HepG2 (cell line): ENCODE measurements at regions of chr22 and their contacts with region 1.

Region 1: GRCh38 chr22:49917974-49918910 is at the starts of genes ALG12 and CRELD2:
- DNase-seq: peak; percentile 91
- ATAC-seq: peak; percentile 96
- H3K4me3 ChIP-seq: peak within 1 kb of the TSS; percentile 82 to 85 (median 83)
- H3K27ac ChIP-seq: peak within 1 kb of the TSS; percentile 93
- H3K4me1 ChIP-seq: peaks cover 26% of the 10 kb centered on the region
- H3K27me3 ChIP-seq: no peaks in the 10 kb centered on the region
- CTCF ChIP-seq: peak; percentile 26; the same call in 1 of the 2 replicates
- EP300 ChIP-seq: no peak
- POLR2A ChIP-seq: peak; percentile 77 to 89
- RAD21 ChIP-seq: peak; percentile 39
- total RNA-seq, gene ALG12: 6.6 and 15.8 TPM in 2 replicates
- total RNA-seq, gene CRELD2: 19.6 and 44.7 TPM in 2 replicates

Region 2: GRCh38 chr22:49852898-49853894 is 65.0 kb before region 1 on chr22 and contains the start of gene ZBED4:
- CTCF ChIA-PET with region 1: no interaction called
- POLR2A ChIA-PET with region 1: interaction called, 5 read pairs
- in situ Hi-C with region 1: no loop called
- intact Hi-C with region 1: loop called (anchors 1 kb)
- DNase-seq: peak; percentile 90
- ATAC-seq: peak; percentile 74
- H3K4me3 ChIP-seq: peak within 1 kb of the TSS; percentile 86 to 97 (median 87)
- H3K27ac ChIP-seq: peak within 1 kb of the TSS; percentile 99
- H3K4me1 ChIP-seq: peaks cover 69% of the 10 kb centered on the region
- H3K27me3 ChIP-seq: peaks cover 7 to 19% of the 10 kb centered on the region in 2 experiments
- CTCF ChIP-seq: no peak
- EP300 ChIP-seq: no peak
- POLR2A ChIP-seq: peak; percentile 77 to 85
- RAD21 ChIP-seq: peak; percentile 53
- total RNA-seq, gene ZBED4: 9.6 and 11.9 TPM in 2 replicates

Region 3: GRCh38 chr22:49869845-49870712 is 48.2 kb before region 1 on chr22:
- CTCF ChIA-PET with region 1: no interaction called
- POLR2A ChIA-PET with region 1: no interaction called
- in situ Hi-C with region 1: no loop called
- intact Hi-C with region 1: loop called (anchors 1 kb)
- DNase-seq: no peak
- ATAC-seq: no peak
- H3K4me3 ChIP-seq: no peak overlapping the region
- H3K27ac ChIP-seq: no peak overlapping the region
- H3K4me1 ChIP-seq: peaks cover 40% of the 10 kb centered on the region
- H3K27me3 ChIP-seq: no peaks in the 10 kb centered on the region
- CTCF ChIP-seq: no peak
- EP300 ChIP-seq: no peak
- POLR2A ChIP-seq: no peak
- RAD21 ChIP-seq: no peak

Region 4: GRCh38 chr22:50044485-50045118 is 126.4 kb after region 1 on chr22:
- CTCF ChIA-PET with region 1: no interaction called
- POLR2A ChIA-PET with region 1: no interaction called
- in situ Hi-C with region 1: no loop called
- intact Hi-C with region 1: no loop called
- DNase-seq: no peak
- ATAC-seq: no peak
- H3K4me3 ChIP-seq: no peak overlapping the region
- H3K27ac ChIP-seq: no peak overlapping the region
- H3K4me1 ChIP-seq: no peaks in the 10 kb centered on the region
- H3K27me3 ChIP-seq: peaks cover 3 to 66% of the 10 kb centered on the region in 2 experiments
- CTCF ChIP-seq: no peak
- EP300 ChIP-seq: no peak
- POLR2A ChIP-seq: no peak
- RAD21 ChIP-seq: no peak